Motor neuron (in vitro differentiated cells): ENCODE measurements at regions of chr6 and their contacts with region 1.

Region 1: DNA sequence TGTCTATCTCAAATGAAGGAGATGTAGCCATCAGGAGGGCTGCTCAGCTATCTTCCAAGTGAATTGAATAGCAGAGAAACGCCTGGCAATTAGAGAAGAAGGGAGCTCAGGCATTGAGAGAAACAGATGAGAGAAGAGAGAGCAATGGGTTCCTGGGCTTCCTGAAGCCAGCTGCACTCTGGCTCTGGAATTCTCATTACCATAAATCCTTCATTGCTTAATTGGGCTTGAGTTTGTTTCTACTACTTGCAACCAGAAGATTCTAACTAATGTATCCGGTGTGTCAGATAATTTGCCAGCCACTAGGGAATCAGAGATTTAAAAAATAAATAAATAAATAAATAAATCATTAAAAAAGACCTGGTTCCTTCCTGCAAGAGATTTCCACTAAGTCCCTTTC is 25.0 kb upstream of the CDKAL1 start:
- ATAC-seq: peak in 2 of 8 experiments; percentile 17 to 23
- H3K4me3 ChIP-seq: no peak overlapping the region
- H3K27ac ChIP-seq: no peak overlapping the region
- H3K4me1 ChIP-seq: no peaks in the 10 kb centered on the region

Region 2: GRCh38 chr6:20291764-20292580 is 217.2 kb before region 1 on chr6:
- in situ Hi-C with region 1: loop called in 1 of 9 experiments (anchors 25 kb)
- ATAC-seq: peak; percentile 72 to 99 (median 90)
- H3K4me3 ChIP-seq: no peak overlapping the region
- H3K27ac ChIP-seq: no peak overlapping the region
- H3K4me1 ChIP-seq: peaks cover 0 to 3% of the 10 kb centered on the region in 2 donors

Region 3: DNA sequence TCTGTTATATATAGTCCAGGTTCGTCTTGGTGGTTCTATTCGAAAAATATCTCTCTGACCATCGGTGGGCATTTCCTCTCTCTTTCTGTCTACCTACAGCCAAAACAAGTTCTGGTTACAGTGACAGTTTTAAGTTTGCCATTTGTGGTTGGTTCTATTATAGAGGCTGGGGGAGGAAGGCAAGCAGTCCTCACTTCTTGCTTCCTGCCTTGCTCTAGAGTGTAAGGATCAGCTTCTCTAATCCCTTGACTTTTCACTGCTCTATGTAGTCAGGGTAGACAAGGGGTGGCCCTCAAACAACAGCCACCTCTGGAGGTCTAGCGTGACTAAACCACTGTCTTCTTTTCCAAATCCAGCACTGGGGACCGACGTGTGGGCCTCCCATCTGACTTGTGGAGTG is 91.4 kb before region 1 on chr6:
- in situ Hi-C with region 1: loop called in 1 of 9 experiments (anchors 10 kb)
- ATAC-seq: no peak
- H3K4me3 ChIP-seq: no peak overlapping the region
- H3K27ac ChIP-seq: no peak overlapping the region
- H3K4me1 ChIP-seq: no peaks in the 10 kb centered on the region

Region 4: DNA sequence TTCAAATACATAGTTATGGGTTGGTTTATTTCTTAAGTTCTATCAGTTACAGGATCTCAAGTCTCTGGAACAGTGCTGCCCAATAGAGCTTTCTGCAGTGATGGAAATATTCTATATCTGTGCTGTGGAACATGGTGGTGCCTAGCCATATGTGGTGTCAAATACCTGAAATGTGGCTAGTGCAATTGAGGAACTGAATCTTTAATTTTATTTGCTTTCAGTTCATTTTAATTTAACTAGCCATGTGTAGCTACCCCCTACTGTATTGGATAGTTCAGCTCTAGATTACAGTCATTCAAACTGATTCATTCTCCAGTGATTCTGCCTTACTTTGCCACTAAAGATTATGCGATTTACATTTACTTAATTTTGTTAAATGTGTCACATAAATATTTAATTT is 528.2 kb after region 1 on chr6:
- in situ Hi-C with region 1: no loop called
- ATAC-seq: no peak
- H3K4me3 ChIP-seq: no peak overlapping the region
- H3K27ac ChIP-seq: no peak overlapping the region
- H3K4me1 ChIP-seq: peaks cover 0 to 5% of the 10 kb centered on the region in 2 donors